ENCODE measurements at regions of chr6 and their contacts with region 1.

Region 1: GRCh38 chr6:155264693-155265320 is 994 bp downstream of the CLDN20 start:
- DNase-seq: no peak
- ATAC-seq: no peak
- H3K4me3 Mint-ChIP-seq: no peak overlapping the region
- H3K27ac Mint-ChIP-seq: no peak overlapping the region
- H3K4me1 Mint-ChIP-seq: peaks cover 15% of the 10 kb centered on the region
- H3K27me3 Mint-ChIP-seq: no peaks in the 10 kb centered on the region
- CTCF ChIP-seq: no peak

Region 2: DNA sequence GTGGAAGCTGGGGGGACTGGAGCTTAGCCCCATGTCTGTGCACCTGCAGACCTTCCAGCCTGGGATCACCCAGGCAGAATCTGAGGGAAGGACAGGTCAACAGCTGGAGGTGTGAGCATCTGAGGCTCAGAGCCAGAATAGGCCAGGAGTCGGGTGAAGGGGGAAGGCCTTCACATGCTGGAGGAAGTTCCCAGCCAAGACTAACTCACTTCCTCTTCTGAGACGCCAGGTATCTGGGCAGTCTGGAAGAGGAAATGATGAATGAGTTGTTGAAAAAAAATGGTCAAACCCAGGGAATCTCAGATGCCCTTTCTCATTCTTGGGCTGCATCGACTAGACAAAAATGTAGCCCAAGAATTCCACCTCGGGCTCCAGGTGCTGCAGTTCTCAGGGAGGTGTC is 343.3 kb before region 1 on chr6:
- CTCF ChIA-PET with region 1: interaction called, 3 read pairs
- POLR2A ChIA-PET with region 1: no interaction called
- intact Hi-C with region 1: loop called (anchors 5 kb)
- DNase-seq: no peak
- ATAC-seq: no peak
- H3K4me3 Mint-ChIP-seq: no peak overlapping the region
- H3K27ac Mint-ChIP-seq: no peak overlapping the region
- H3K4me1 Mint-ChIP-seq: peaks cover 12% of the 10 kb centered on the region
- H3K27me3 Mint-ChIP-seq: no peaks in the 10 kb centered on the region
- CTCF ChIP-seq: no peak

Region 3: DNA sequence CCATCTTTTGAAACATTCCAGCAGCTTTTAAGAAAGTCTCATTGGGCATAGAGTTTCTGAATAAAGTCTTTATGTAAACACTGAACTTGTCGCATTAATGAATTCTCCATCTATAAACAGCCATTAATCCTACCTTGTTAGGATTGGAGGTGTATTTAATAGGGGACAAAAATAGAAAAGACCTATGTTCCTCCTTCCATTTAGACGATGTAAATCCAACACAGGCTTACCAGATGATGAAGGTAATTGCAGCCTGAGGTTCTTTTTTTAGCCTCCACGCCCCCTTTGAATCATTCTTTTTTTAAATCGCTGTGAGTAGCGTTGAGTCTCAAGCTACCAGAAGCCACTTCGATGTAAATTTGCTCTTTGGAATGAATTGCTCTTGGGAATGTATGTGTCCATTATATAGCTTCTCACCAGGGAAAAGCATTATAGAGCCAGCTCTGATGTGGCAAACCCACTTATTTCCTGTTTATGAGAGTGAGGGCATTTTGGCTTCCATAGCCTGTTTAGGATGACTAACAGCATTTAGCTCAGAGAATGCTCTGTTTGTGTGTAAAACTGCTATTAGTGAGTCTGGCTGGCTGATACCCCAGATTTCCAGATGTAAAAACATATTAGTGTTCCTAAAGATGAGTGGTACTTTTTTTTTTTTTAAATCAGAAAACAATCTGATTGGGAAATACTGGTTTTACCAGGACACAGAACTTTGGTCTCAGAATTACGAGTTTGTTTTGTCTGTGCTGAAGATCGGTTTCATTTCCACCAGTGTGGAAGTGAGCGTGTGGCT is 75.9 kb before region 1 on chr6:
- CTCF ChIA-PET with region 1: no interaction called
- POLR2A ChIA-PET with region 1: no interaction called
- intact Hi-C with region 1: loop called (anchors 5 kb)
- DNase-seq: no peak
- ATAC-seq: no peak
- H3K4me3 Mint-ChIP-seq: no peak overlapping the region
- H3K27ac Mint-ChIP-seq: peak overlapping the region; percentile 20
- H3K4me1 Mint-ChIP-seq: peaks cover 42% of the 10 kb centered on the region
- H3K27me3 Mint-ChIP-seq: peaks cover 1% of the 10 kb centered on the region
- CTCF ChIP-seq: no peak

Region 4: DNA sequence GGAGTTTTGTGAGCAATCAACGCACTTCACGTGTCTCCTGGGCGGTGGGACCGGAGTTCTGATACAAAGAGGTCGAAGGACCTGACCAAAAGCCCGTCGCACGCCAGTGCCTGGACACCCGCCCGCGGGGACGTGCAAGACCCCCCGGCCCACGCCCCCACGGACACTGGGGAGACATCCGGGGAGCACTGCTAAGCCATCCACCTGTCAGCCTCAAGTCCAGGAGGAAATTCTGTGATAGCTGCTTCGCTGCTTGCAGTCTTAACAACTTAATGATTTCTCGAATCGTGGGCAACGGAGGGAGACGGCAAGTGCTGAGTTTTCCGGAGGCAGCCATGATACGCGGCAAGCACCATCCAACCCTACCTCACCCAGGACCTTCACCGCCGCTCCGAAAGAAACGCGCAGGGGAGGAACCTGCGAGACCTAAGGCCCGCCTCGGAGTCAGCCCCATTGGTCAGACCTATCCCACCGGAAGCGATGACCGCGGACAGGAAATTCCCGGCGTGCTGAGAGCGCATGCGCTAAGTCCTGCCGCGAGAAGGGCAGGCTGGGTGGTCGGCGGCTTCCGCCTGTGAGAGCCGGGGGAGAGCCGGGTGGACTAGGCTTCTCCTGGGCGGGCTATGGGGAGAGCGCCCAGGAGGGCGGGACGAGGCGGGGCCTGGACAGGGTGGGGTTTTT is 49.4 kb after region 1 on chr6 and contains the start of gene TFB1M:
- CTCF ChIA-PET with region 1: no interaction called
- POLR2A ChIA-PET with region 1: no interaction called
- intact Hi-C with region 1: no loop called
- DNase-seq: peak; percentile 99
- ATAC-seq: peak; percentile 96
- H3K4me3 Mint-ChIP-seq: peak within 1 kb of the TSS; percentile 98
- H3K27ac Mint-ChIP-seq: peak within 1 kb of the TSS; percentile 99
- H3K4me1 Mint-ChIP-seq: peaks cover 38% of the 10 kb centered on the region
- H3K27me3 Mint-ChIP-seq: no peaks in the 10 kb centered on the region
- CTCF ChIP-seq: no peak
- total RNA-seq, gene TFB1M: 70.9 to 76.6 TPM

Measured in activated CD8-positive, alpha-beta T cell treated with anti-CD3 and anti-CD28 coated beads for 36 hours (primary cell).